ENCODE measurements at regions of chr7 and their contacts with region 1.

Region 1: DNA sequence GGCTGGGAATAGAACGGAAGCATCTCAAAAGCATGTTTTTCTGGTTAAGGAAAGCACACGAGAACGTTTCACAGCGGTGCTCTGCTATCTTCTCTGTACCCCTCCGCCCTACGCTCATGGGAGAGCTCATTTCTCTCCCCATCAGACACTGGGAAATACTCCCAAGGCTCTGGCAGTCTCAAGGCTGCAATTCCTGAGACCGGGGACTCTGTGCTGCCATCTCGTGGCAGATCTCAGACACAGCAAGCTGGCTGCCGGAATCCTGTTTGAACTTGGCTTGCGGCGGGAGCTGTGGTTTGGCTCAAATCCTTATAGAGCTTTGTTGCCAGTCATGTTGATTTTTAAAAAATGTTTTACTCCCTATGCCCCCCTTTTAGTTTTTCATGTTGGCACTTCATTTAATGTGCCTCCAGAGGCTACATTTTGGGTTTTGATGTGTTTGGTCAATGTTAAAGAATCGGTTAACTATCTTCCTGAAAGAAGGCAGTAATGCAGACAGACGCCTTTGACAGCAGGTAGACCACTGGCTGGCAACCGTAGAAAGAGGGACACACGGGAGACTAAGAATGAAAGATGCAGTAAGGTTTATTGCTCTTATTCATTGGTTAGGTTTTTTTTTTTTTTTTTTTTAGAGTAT is 27.6 kb downstream of the BMPER start:
- DNase-seq: peak; percentile 80
- H3K4me3 ChIP-seq: peak overlapping the region; percentile 30 to 49
- H3K27ac ChIP-seq: peak overlapping the region in 1 of 2 experiments; percentile 91; a peak in 2 of 4 replicates
- H3K4me1 ChIP-seq: peaks cover 19 to 24% of the 10 kb centered on the region in 2 experiments
- H3K27me3 ChIP-seq: no peaks in the 10 kb centered on the region
- CTCF ChIP-seq: peak; percentile 100
- EP300 ChIP-seq: no peak; a peak in 1 of 4 replicates
- RAD21 ChIP-seq: peak; percentile 91

Region 2: DNA sequence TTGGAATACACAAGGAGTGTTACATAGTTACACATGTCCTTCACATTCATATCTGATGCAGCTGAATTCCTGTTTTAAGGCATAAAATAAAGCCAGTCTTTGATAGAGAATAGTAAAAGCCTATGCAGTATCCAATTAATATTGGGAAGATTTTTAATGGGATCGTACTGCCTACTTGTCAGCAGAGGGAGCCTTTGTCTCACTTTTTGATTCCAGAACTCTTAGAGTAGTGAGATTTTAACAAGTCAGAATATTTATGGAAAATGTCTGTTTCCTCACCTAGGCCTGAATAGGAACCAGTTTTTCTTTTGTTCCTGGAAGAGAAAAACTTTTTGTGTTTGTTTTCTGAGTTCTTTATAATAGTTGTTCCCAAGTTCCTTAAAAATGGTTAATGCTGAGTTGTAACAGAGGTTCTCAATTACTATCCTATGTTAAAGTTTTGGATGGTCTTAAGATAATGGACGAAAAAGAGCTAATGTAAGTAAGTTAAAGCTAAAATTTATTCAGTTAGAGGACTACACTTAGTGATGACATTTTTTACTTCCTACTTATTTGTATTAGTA is 689.5 kb before region 1 on chr7:
- CTCF ChIA-PET with region 1: interaction called, 66 read pairs
- POLR2A ChIA-PET with region 1: no interaction called
- DNase-seq: peak; percentile 57
- H3K4me3 ChIP-seq: no peak overlapping the region
- H3K27ac ChIP-seq: no peak overlapping the region
- H3K4me1 ChIP-seq: no peaks in the 10 kb centered on the region
- H3K27me3 ChIP-seq: no peaks in the 10 kb centered on the region
- CTCF ChIP-seq: peak; percentile 97
- EP300 ChIP-seq: no peak
- RAD21 ChIP-seq: peak; percentile 99

Region 3: DNA sequence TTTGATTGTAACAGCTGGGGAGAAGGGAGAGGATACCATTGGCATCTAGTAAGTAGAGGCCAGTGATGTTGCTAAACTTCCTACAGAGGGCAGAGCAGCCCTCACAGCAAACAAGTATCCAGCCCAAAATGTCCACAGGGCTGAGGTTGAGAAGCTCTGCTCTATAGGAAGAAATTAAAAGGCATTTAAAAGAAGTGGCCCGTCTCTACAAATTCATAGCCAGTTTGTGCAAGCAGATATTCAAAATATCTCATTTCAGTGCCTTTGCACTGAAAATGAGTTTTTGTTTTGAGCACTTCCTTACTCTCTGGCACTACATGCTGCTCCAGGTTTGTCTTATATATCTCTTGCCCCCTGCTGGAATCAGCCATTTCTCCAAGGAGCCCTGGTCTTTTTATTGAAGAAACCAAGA is 473.6 kb before region 1 on chr7:
- CTCF ChIA-PET with region 1: interaction called, 15 read pairs
- POLR2A ChIA-PET with region 1: no interaction called
- DNase-seq: peak; percentile 27
- H3K4me3 ChIP-seq: no peak overlapping the region
- H3K27ac ChIP-seq: no peak overlapping the region
- H3K4me1 ChIP-seq: no peaks in the 10 kb centered on the region
- H3K27me3 ChIP-seq: no peaks in the 10 kb centered on the region
- CTCF ChIP-seq: peak; percentile 63
- EP300 ChIP-seq: no peak
- RAD21 ChIP-seq: peak; percentile 75

Region 4: GRCh38 chr7:33757562-33758165 is 175.3 kb before region 1 on chr7:
- CTCF ChIA-PET with region 1: interaction called, 53 read pairs
- POLR2A ChIA-PET with region 1: no interaction called
- DNase-seq: peak; percentile 45
- H3K4me3 ChIP-seq: no peak overlapping the region
- H3K27ac ChIP-seq: no peak overlapping the region
- H3K4me1 ChIP-seq: peaks cover 7 to 11% of the 10 kb centered on the region in 2 experiments; a peak in 3 of 4 replicates
- H3K27me3 ChIP-seq: no peaks in the 10 kb centered on the region
- CTCF ChIP-seq: peak; percentile 92
- EP300 ChIP-seq: no peak
- RAD21 ChIP-seq: peak; percentile 77

Region 5: GRCh38 chr7:33854801-33855350 is 78.1 kb before region 1 on chr7:
- CTCF ChIA-PET with region 1: no interaction called
- POLR2A ChIA-PET with region 1: no interaction called
- DNase-seq: no peak
- H3K4me3 ChIP-seq: no peak overlapping the region
- H3K27ac ChIP-seq: no peak overlapping the region
- H3K4me1 ChIP-seq: no peaks in the 10 kb centered on the region
- H3K27me3 ChIP-seq: no peaks in the 10 kb centered on the region
- CTCF ChIP-seq: no peak
- EP300 ChIP-seq: no peak
- RAD21 ChIP-seq: no peak

Region 6: DNA sequence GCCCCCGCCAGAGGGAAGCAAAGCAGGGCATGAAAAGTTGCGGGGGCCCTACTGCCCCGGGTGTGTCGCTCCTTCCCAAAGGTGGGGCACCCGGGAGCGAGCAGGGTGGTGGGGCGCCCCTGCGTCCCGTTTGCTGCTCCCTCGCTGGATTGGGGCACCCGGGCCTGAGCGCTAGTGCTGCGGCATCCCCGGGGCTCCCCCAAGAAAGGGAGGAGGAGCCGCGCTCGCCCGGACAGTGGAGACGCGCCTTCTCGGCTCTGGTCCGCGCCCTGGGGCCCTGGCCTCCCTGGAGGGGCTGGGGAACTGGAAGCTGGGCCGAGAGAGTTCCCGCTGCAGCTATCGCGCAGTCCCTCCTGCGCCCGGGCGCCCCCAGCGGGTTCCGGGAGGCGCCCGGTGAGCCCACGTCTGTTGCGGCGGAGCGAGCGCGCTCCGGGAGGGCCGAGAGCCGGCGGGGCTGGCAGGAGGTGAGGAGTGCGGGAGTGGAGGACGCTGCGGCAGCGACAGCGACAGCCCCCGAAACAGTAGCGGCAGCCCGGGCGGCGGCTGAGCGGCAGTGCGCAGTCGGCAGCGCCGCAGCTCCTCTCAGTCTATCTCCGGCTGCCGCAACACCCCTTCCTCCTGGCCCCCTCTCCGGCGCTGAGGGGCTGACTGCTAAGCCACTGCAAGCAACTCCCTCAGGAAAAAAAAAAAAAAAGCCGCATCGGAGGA is 28.1 kb before region 1 on chr7:
- CTCF ChIA-PET with region 1: interaction called, 97 read pairs
- POLR2A ChIA-PET with region 1: no interaction called
- DNase-seq: peak; percentile 84
- H3K4me3 ChIP-seq: peak overlapping the region; percentile 80 to 86
- H3K27ac ChIP-seq: peak overlapping the region in 1 of 2 experiments; percentile 66; a peak in 2 of 4 replicates
- H3K4me1 ChIP-seq: peaks cover 17 to 21% of the 10 kb centered on the region in 2 experiments; a peak in 3 of 4 replicates
- H3K27me3 ChIP-seq: no peaks in the 10 kb centered on the region
- CTCF ChIP-seq: peak; percentile 45
- EP300 ChIP-seq: peak in 1 of 2 experiments; percentile 27; a peak in 1 of 4 replicates
- RAD21 ChIP-seq: no peak

Region 7: DNA sequence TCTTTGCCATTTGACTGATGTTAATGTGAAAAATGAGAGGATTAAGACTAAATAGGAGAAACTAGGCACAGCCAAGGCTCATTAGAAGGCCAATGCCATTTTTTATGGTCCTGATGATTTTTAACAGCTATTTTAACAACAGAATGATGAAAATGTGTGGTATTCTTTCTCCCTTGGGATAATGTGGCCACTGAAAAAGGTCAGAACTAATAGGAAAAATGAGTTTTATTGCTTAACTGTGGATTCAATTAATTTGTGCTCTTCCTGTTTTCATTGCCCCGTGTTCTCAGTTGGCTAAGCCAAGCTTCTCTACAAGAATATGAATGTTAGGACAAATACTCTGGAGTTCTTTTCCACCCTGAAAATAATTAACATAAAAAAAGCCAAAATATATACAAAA is 29.0 kb after region 1 on chr7:
- CTCF ChIA-PET with region 1: interaction called, 12 read pairs
- POLR2A ChIA-PET with region 1: no interaction called
- DNase-seq: no peak
- H3K4me3 ChIP-seq: no peak overlapping the region
- H3K27ac ChIP-seq: no peak overlapping the region
- H3K4me1 ChIP-seq: peaks cover 0 to 5% of the 10 kb centered on the region in 2 experiments; a peak in 2 of 4 replicates
- H3K27me3 ChIP-seq: no peaks in the 10 kb centered on the region
- CTCF ChIP-seq: no peak
- EP300 ChIP-seq: no peak
- RAD21 ChIP-seq: no peak

Measured in SK-N-SH (cell line).